ENCODE measurements at regions of chr22 and their contacts with region 1.

Region 1: GRCh38 chr22:30890686-30891442 is 77.7 kb downstream of the MORC2 start:
- DNase-seq: peak; percentile 63
- ATAC-seq: peak; percentile 73
- H3K4me3 Mint-ChIP-seq: no peak overlapping the region
- H3K27ac Mint-ChIP-seq: no peak overlapping the region
- H3K4me1 Mint-ChIP-seq: peaks cover 23% of the 10 kb centered on the region
- H3K27me3 Mint-ChIP-seq: no peaks in the 10 kb centered on the region

Region 2: DNA sequence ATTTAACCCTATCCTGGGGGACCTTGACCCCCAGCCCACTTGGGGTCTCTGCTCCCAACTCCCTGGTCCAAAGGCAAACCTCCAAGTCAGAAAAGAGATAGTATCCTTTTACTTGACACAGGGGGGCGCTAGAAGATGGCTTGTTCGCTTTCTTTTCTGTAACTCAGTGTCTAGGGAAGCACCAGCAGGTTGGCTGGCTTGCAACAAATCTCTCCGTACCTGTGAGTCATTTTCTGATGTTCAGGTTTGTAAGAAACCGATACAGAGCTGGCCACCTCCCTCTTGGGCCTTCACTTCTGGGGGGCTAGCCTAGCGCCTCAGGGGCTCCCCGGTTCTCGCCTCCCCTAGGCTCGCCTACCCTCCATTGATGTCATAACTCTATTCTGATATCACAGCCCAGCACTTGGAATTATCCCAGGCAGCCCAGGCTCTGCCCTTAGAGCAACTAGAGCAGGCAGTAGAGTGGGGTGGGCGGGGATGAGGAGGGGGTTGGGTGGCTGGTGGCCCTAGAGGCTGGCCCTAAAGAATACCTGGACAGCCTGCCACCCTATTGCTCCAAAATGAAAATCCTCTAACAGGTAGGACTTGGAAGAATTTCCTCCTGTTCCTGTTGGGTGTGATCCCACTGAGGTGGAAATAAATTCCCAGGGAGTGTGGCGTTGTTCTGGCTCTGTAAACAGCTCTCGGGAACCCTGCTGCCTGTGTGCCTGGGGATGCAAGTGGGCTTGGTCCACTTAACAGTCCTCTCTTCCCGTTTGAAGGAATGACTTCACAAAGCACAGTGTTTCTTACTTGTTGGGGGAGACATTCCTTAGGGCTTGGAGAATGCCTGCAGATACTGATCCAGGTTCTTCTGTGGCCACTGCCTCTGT is 126.8 kb before region 1 on chr22:
- CTCF ChIA-PET with region 1: interaction called, 12 read pairs
- POLR2A ChIA-PET with region 1: no interaction called
- intact Hi-C with region 1: loop called (anchors 1 kb)
- DNase-seq: peak; percentile 77
- ATAC-seq: peak; percentile 96
- H3K4me3 Mint-ChIP-seq: no peak overlapping the region
- H3K27ac Mint-ChIP-seq: no peak overlapping the region
- H3K4me1 Mint-ChIP-seq: no peaks in the 10 kb centered on the region
- H3K27me3 Mint-ChIP-seq: no peaks in the 10 kb centered on the region

Region 3: GRCh38 chr22:30931541-30932300 is 40.9 kb after region 1 on chr22:
- CTCF ChIA-PET with region 1: no interaction called
- POLR2A ChIA-PET with region 1: no interaction called
- intact Hi-C with region 1: no loop called
- DNase-seq: no peak
- ATAC-seq: no peak
- H3K4me3 Mint-ChIP-seq: no peak overlapping the region
- H3K27ac Mint-ChIP-seq: peak overlapping the region; percentile 45
- H3K4me1 Mint-ChIP-seq: peaks cover 9% of the 10 kb centered on the region
- H3K27me3 Mint-ChIP-seq: no peaks in the 10 kb centered on the region